Calu3 (cell line): ENCODE measurements at regions of chr12 and their contacts with region 1.

Region 1: GRCh38 chr12:13362260-13362841 is 165.8 kb downstream of the EMP1 start:
- DNase-seq: peak; percentile 84
- H3K4me3 Mint-ChIP-seq: no peak overlapping the region
- H3K27ac Mint-ChIP-seq: peak overlapping the region; percentile 82
- H3K4me1 Mint-ChIP-seq: peaks cover 31% of the 10 kb centered on the region
- H3K27me3 Mint-ChIP-seq: no peaks in the 10 kb centered on the region
- CTCF ChIP-seq: peak; percentile 70

Region 2: GRCh38 chr12:13255792-13256691 is 106.3 kb before region 1 on chr12:
- CTCF ChIA-PET with region 1: interaction called, 18 read pairs
- intact Hi-C with region 1: no loop called
- DNase-seq: peak; percentile 94
- H3K4me3 Mint-ChIP-seq: peak overlapping the region; percentile 53
- H3K27ac Mint-ChIP-seq: peak overlapping the region; percentile 16
- H3K4me1 Mint-ChIP-seq: peaks cover 11% of the 10 kb centered on the region
- H3K27me3 Mint-ChIP-seq: no peaks in the 10 kb centered on the region
- CTCF ChIP-seq: peak; percentile 86

Region 3: DNA sequence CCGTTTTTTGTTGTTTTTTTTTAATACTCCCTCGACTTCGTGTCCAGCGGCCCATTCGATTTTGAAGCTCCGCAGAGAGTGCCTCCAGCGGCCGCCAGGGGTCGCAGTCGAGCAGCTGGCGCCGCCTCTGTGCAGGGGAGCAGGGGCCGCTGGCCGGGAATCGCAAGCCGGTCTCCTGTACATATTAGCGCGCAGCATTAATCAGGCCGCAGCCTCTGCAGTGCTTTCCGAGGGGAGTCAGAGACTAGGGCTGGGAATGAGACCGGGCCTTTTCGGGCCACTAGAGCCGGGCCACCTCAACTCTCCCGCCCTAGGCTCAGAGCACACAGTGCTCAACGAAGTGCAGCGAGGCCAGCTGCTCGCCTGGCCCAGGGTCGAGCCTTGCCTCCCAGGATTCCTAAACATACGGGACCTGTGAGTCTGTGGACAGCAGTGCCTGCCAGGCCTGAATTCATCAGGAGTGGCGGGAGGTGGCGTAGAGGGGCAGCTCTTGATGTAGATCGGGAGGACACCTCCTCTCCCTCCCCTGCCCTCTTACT is 84.0 kb before region 1 on chr12:
- CTCF ChIA-PET with region 1: interaction called, 9 read pairs
- intact Hi-C with region 1: loop called (anchors 5 kb)
- DNase-seq: peak; percentile 84
- H3K4me3 Mint-ChIP-seq: no peak overlapping the region
- H3K27ac Mint-ChIP-seq: no peak overlapping the region
- H3K4me1 Mint-ChIP-seq: no peaks in the 10 kb centered on the region
- H3K27me3 Mint-ChIP-seq: peaks cover 30% of the 10 kb centered on the region
- CTCF ChIP-seq: peak; percentile 93

Region 4: DNA sequence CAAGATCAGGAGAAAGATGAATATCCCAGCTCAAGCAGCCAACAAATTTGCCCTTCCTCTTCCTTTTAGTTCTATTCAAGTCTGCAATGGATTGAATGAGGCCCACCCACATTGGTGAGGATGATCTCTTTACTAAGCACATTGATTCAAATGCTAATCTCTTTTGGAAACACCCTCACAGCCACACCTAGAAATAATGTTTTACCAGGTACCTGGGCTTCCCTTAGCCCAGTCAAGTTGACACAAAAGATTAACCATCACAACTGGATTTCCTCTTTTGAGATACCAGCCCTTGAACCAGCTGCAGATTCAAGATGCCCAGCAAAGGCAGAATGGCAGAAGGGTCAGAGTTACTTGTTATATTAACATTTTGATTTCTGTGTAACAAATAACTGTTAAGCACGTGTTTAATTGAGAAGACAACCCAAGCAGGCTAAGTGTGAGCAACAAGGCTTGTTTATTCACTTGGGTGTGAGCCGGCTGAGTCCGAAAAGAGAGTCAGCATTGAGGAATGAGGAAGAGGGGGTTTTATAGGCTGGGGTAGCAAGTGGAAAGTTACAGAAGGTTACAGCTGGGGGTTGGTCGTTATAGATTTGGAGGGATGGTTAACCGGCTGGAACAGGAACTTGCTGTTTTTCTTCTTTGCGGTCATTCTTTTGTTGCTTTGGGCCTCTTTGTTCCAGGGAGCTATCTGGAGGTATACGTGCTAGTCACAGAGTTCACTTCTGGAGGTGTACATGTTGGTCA is 14.4 kb after region 1 on chr12:
- CTCF ChIA-PET with region 1: interaction called, 16 read pairs
- intact Hi-C with region 1: no loop called
- DNase-seq: peak; percentile 82
- H3K4me3 Mint-ChIP-seq: peak overlapping the region; percentile 57
- H3K27ac Mint-ChIP-seq: peak overlapping the region; percentile 97
- H3K4me1 Mint-ChIP-seq: peaks cover 62% of the 10 kb centered on the region
- H3K27me3 Mint-ChIP-seq: no peaks in the 10 kb centered on the region
- CTCF ChIP-seq: no peak

Region 5: DNA sequence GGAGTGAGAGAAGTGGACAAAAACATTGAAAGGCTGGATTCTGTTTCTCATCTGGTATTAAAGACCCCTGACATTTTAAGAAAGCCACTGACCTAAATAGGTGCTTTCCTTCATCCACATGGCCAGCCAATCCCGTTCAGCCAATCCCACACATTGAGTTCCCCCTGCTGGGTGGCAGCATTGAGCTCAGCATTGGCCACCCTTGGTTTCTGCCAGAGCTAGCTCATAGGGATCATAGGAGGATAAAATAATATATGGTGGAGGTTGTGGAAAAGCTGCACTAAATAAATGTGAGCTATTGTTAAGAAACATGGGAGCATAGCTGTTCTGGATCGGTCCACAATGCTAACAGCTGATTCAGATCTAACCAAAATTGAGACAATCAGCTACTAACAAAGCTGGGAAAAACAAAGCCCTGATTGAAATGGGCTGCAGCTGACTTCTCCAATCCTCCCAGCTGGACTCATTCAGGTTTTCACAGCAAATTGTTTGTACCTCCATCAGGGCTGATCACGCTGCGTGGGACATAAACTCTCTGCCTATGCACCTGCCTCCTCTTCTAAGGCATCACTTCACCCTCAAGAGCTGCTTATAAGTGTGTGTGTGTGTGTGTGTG is 90.7 kb after region 1 on chr12:
- CTCF ChIA-PET with region 1: no interaction called
- intact Hi-C with region 1: loop called (anchors 10 kb)
- DNase-seq: no peak
- H3K4me3 Mint-ChIP-seq: no peak overlapping the region
- H3K27ac Mint-ChIP-seq: no peak overlapping the region
- H3K4me1 Mint-ChIP-seq: no peaks in the 10 kb centered on the region
- H3K27me3 Mint-ChIP-seq: no peaks in the 10 kb centered on the region
- CTCF ChIP-seq: no peak

Region 6: GRCh38 chr12:13534645-13535398 is 172.5 kb after region 1 on chr12:
- CTCF ChIA-PET with region 1: interaction called, 23 read pairs
- intact Hi-C with region 1: loop called (anchors 2 kb)
- DNase-seq: peak; percentile 83
- H3K4me3 Mint-ChIP-seq: no peak overlapping the region
- H3K27ac Mint-ChIP-seq: no peak overlapping the region
- H3K4me1 Mint-ChIP-seq: peaks cover 8% of the 10 kb centered on the region
- H3K27me3 Mint-ChIP-seq: no peaks in the 10 kb centered on the region
- CTCF ChIP-seq: peak; percentile 88

Region 7: GRCh38 chr12:13661005-13661887 is 298.9 kb after region 1 on chr12:
- CTCF ChIA-PET with region 1: interaction called, 12 read pairs
- intact Hi-C with region 1: loop called (anchors 2 kb)
- DNase-seq: peak; percentile 62
- H3K4me3 Mint-ChIP-seq: no peak overlapping the region
- H3K27ac Mint-ChIP-seq: no peak overlapping the region
- H3K4me1 Mint-ChIP-seq: peaks cover 16% of the 10 kb centered on the region
- H3K27me3 Mint-ChIP-seq: no peaks in the 10 kb centered on the region
- CTCF ChIP-seq: peak; percentile 85

Region 8: GRCh38 chr12:14403711-14404196 is 1041.4 kb after region 1 on chr12:
- CTCF ChIA-PET with region 1: no interaction called
- intact Hi-C with region 1: no loop called
- DNase-seq: peak; percentile 43
- H3K4me3 Mint-ChIP-seq: no peak overlapping the region
- H3K27ac Mint-ChIP-seq: peak overlapping the region; percentile 34
- H3K4me1 Mint-ChIP-seq: peaks cover 37% of the 10 kb centered on the region
- H3K27me3 Mint-ChIP-seq: no peaks in the 10 kb centered on the region
- CTCF ChIP-seq: no peak